Posterior cingulate gyrus (tissue), 11 donors: ENCODE measurements at regions of chr1 and their contacts with region 1.

Region 1: DNA sequence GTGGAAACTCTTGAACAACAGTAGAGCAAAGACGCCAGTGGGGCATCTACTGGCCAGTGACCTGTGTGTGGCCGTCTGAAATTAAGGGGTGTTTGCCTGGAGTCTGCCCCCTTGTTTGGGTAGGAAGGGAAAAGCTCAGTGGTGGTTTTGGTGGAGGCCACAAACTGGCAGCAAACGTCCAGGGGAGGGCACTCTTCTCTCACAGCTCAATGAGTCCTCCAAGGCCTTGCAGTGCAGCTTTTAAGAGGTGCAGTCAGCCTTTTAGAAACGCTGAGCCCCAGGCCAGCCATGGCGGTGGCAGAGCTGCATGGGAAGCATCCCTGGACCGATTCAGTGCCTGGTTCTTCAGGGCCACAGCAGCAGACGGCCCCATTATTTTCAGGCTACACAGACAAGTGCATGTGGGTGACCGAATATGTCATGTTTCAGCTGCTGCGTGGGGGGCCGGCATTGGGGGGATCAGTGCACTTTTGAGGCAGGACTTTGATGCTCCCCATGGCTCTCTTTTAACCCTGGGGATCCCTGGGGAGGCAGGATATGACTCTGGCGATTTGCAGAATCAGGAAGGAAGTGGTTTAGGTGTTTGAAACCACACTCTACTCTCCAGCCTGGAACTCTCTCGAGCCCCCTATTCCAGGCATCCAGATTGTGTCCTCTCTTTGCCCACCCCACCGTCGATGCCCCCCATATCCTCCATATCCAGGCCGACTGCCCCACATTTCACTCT is 414.0 kb downstream of the PRDM2 start:
- DNase-seq: peak; percentile 47 to 96 (median 78)

Region 2: GRCh38 chr1:14571819-14572767 is 458.1 kb after region 1 on chr1:
- intact Hi-C with region 1: loop called (anchors 10 kb)
- DNase-seq: peak in 3 of 10 donors; percentile 39 to 89 (median 41)

Region 3: DNA sequence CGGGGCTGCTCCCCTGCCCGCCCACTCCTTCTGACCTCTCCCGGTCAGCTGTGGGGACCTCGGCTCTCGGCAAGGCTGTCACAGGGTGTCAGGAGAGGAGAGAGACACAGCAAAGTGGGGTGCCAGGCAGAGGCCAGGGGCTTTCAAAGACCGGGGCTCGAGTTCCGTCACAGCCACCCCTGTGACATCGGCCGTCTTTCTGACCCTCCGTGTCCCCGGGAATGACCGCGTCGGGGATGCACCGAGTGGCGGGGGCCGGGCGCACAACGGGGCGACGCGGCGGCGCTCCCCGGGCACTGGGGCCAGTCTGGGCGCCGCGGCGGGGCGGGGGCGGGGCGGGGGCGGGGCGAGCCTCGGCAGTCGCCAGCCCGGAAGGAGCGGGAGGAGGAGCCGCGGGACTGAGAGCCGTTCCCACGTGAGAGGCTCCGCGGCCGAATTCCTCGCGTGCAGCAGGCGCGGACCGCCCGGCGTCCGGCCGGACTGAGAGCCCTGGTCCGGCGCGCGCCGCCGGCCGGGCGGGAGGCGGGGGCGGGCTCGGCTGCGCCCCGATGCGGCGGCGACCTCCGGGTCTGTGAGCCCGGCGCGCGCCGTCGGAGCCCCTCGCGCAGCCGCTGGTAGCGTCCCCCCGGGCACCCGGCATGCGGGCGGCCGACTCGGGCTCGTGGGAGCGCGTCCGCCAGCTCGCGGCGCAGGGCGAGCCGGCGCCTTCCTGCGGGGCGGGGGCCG is 809.9 kb after region 1 on chr1:
- intact Hi-C with region 1: loop called (anchors 10 kb)
- DNase-seq: peak in 9 of 10 donors; percentile 49 to 95 (median 69)